ENCODE measurements at regions of chr1 and their contacts with region 1.

Region 1: GRCh38 chr1:108892356-108893140 is 15.8 kb downstream of the GPSM2 start:
- DNase-seq: no peak
- H3K4me3 ChIP-seq: no peak overlapping the region
- H3K4me1 ChIP-seq: peaks cover 13% of the 10 kb centered on the region
- H3K27me3 ChIP-seq: no peaks in the 10 kb centered on the region

Region 2: DNA sequence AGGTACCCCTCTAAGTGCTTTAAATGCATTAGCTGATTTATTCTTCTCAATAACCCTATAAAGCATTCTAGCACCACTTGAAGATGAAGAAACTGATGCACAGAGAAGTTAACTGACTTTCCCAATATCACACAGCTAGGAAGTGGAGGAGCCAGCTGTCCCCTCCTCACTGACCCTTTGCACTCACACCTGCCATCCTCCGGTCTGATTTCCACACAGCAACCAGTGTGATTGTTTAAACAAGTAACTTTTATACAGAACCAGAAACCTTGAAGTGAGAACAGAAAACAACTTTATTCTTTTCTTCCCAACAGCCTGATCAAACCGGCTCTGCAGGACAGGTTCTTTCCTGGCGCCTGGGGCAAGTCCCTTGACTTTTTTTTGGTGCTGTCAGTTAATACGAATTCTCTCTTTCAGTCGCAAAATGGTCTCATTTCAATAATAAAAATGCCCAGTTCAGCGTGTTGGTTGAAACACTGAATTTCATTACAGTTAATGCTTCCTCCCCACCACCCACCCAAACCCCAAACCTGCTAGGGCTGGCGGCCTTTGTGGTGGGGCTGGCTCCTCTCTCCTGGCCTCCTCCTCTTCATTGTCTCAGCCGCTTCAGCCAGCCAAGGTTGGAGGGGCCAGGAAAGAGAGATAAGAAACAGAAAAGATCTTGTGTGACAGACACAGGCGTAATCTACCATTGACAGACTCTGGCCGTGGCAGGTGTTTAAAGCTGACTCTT is 359.0 kb before region 1 on chr1:
- in situ Hi-C with region 1: no loop called
- DNase-seq: peak; percentile 50 to 61
- H3K4me3 ChIP-seq: no peak overlapping the region
- H3K4me1 ChIP-seq: peaks cover 6% of the 10 kb centered on the region
- H3K27me3 ChIP-seq: no peaks in the 10 kb centered on the region

Region 3: GRCh38 chr1:108708691-108709660 is 183.6 kb before region 1 on chr1:
- in situ Hi-C with region 1: no loop called
- DNase-seq: peak in 1 of 2 experiments; percentile 50
- H3K4me3 ChIP-seq: no peak overlapping the region
- H3K4me1 ChIP-seq: no peaks in the 10 kb centered on the region
- H3K27me3 ChIP-seq: peaks cover 10% of the 10 kb centered on the region

Region 4: DNA sequence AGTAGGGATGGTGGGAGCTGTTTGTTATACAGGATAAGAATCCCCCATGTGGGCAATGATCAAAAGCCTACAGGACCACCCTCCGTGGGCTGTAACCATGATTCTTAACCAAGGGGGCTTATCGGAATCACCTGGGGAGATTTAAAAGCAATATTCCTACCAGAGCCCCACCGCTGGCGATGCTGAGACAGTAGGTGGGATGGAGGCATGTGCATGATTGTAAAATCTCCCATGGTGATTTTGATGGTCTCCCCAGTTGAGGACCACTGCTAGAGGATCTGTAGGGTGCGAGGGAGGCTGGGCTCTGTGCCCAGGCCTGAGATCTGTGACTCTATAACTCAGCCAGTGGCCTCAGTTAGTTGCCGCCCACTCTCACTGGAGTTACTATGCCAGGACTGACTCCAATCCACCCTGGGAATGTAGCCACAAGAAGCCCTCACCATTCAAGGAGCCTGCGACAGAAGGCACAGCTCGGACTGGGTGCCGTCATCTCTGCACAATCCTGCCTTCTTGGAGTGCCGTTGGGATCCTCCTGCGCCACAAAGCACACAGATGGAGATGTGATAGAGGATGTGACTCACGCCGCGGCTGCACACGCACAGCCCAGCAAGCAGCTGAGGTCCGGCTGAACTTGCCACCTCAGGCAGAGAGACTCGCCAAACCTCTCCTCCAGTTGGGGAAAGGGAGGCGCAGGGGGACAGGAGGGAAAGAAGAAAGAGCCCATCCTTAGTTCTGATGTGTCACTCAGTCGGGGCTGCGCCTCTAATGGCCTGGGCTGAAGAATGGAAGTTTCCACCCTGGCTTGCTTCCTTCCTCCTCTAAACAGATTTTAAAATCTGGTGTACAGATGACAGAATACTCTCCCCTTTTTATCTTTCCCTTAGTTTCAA is 62.2 kb before region 1 on chr1:
- in situ Hi-C with region 1: loop called (anchors 5 kb)
- DNase-seq: no peak
- H3K4me3 ChIP-seq: no peak overlapping the region
- H3K4me1 ChIP-seq: peaks cover 16% of the 10 kb centered on the region
- H3K27me3 ChIP-seq: no peaks in the 10 kb centered on the region

Measured in HAP-1 (cell line).